ENCODE measurements at regions of chr20 and their contacts with region 1.

Region 1: GRCh38 chr20:40741507-40742106 is 52.6 kb upstream of the MAFB start:
- DNase-seq: no peak
- ATAC-seq: peak; percentile 82
- H3K4me3 ChIP-seq: no peak overlapping the region
- H3K27ac ChIP-seq: no peak overlapping the region
- H3K4me1 ChIP-seq: no peaks in the 10 kb centered on the region
- H3K27me3 ChIP-seq: peaks cover 3 to 6% of the 10 kb centered on the region in 2 experiments; a peak in 2 of 4 replicates
- CTCF ChIP-seq: peak; percentile 59 to 79 (median 74)
- EP300 ChIP-seq: no peak
- POLR2A ChIP-seq: no peak
- RAD21 ChIP-seq: peak; percentile 51

Region 2: DNA sequence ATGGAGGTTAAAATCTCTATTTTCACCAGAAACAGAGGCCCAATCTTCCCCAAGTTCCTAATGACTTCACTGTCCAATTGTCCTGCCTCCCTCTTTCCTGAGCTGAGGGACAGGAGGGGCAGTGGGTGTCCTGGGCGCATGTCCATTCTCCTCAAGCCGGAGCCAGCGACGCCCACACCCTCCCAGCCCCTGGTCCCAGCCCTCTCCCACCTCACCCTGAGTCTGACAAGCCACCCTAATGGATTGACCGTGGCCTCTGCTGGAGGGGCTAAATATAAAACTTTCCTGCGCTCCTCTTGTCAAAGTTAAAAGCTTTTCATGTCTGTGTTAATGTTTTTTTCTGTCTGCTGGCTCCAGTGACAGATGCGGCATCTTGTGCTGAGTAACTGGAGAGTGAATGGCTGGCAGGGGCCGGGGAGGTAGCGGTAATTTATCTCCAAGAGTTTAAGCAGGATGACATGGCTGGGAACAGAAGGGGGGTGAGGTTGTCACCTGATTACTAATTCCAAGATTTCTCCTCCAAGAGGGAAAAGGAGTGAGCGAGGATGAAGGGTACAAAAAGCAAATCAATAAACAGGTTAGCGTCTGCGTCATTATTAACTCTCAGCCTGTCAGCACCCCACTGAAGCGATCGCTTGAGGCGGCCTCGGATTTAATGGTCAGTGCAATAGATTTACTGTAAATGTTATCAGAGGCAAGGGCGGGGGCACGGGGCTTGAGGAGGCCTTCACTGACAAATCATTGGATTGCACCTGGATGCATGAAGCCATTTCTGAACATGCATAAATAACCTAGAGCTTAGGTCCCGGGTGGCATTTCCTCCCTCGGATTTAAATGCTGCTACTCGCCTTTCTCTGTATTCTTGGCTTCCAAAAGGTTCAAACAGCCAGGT is 65.6 kb after region 1 on chr20:
- CTCF ChIA-PET with region 1: no interaction called
- POLR2A ChIA-PET with region 1: no interaction called
- RAD21 ChIA-PET with region 1: no interaction called
- SMC1A ChIA-PET with region 1: no interaction called
- in situ Hi-C with region 1: no loop called
- intact Hi-C with region 1: no loop called
- DNase-seq: no peak
- ATAC-seq: no peak
- H3K4me3 ChIP-seq: no peak overlapping the region
- H3K27ac ChIP-seq: no peak overlapping the region
- H3K4me1 ChIP-seq: no peaks in the 10 kb centered on the region
- H3K27me3 ChIP-seq: peaks cover 0 to 3% of the 10 kb centered on the region in 2 experiments; a peak in 2 of 4 replicates
- CTCF ChIP-seq: no peak
- EP300 ChIP-seq: no peak
- POLR2A ChIP-seq: no peak
- RAD21 ChIP-seq: no peak

Region 3: GRCh38 chr20:40945754-40946450 is 204.3 kb after region 1 on chr20:
- CTCF ChIA-PET with region 1: interaction called, 8 read pairs
- POLR2A ChIA-PET with region 1: no interaction called
- RAD21 ChIA-PET with region 1: interaction called, 3 read pairs
- SMC1A ChIA-PET with region 1: interaction called, 3 read pairs
- in situ Hi-C with region 1: no loop called
- intact Hi-C with region 1: loop called (anchors 1 kb)
- DNase-seq: no peak
- ATAC-seq: peak; percentile 78
- H3K4me3 ChIP-seq: no peak overlapping the region
- H3K27ac ChIP-seq: no peak overlapping the region
- H3K4me1 ChIP-seq: peaks cover 14% of the 10 kb centered on the region
- H3K27me3 ChIP-seq: no peaks in the 10 kb centered on the region
- CTCF ChIP-seq: peak; percentile 52 to 63 (median 60); a peak in 5 of 6 replicates
- EP300 ChIP-seq: no peak
- POLR2A ChIP-seq: no peak
- RAD21 ChIP-seq: peak; percentile 70

Region 4: GRCh38 chr20:40980106-40980827 is 238.7 kb after region 1 on chr20:
- CTCF ChIA-PET with region 1: no interaction called
- POLR2A ChIA-PET with region 1: no interaction called
- RAD21 ChIA-PET with region 1: no interaction called
- SMC1A ChIA-PET with region 1: no interaction called
- in situ Hi-C with region 1: no loop called
- intact Hi-C with region 1: no loop called
- DNase-seq: peak; percentile 83
- ATAC-seq: peak; percentile 86
- H3K4me3 ChIP-seq: peak overlapping the region; percentile 20; the same call in 1 of the 2 replicates
- H3K27ac ChIP-seq: peak overlapping the region; percentile 75
- H3K4me1 ChIP-seq: peaks cover 32% of the 10 kb centered on the region
- H3K27me3 ChIP-seq: no peaks in the 10 kb centered on the region
- CTCF ChIP-seq: no peak
- EP300 ChIP-seq: peak; percentile 6 to 48; a peak in 2 of 4 replicates
- POLR2A ChIP-seq: 0 out of 2 replicates have a peak, but pooled peaks have one; percentile 39
- RAD21 ChIP-seq: 0 out of 2 replicates have a peak, but pooled peaks have one; percentile 23

Measured in GM12878 (cell line).